Transverse colon (tissue), 4 donors: ENCODE measurements at regions of chr15 and their contacts with region 1.

Region 1: GRCh38 chr15:27028858-27029477 is 58.0 kb downstream of the GABRG3 start:
- DNase-seq: no peak
- H3K4me3 ChIP-seq: no peak overlapping the region
- H3K27ac ChIP-seq: no peak overlapping the region
- H3K4me1 ChIP-seq: no peaks in the 10 kb centered on the region
- H3K27me3 ChIP-seq: no peaks in the 10 kb centered on the region
- CTCF ChIP-seq: no peak
- EP300 ChIP-seq: no peak
- POLR2A ChIP-seq: no peak

Region 2: DNA sequence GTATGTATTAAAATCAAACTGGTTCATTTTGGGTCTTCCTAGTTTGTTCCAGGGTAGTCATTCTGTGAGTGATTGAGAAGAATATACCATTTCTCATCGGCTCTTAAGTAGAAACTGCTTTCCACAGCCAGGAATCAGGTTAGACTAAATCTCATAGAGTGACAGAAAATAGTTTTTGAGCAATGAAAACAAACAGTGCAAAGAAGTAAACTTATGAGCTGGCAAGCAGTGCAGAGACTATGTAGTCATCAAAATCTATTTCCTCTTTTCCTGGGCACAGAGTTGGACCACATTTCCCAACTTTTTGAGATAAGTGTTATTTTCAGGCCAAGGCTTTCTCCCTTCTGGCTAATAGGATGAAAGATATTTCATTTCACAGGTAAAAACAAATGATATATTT is 1656.7 kb before region 1 on chr15:
- in situ Hi-C with region 1: no loop called
- intact Hi-C with region 1: loop called (anchors 5 kb)
- DNase-seq: no peak
- H3K4me3 ChIP-seq: no peak overlapping the region
- H3K27ac ChIP-seq: no peak overlapping the region
- H3K4me1 ChIP-seq: no peaks in the 10 kb centered on the region
- H3K27me3 ChIP-seq: no peaks in the 10 kb centered on the region
- CTCF ChIP-seq: no peak
- EP300 ChIP-seq: no peak
- POLR2A ChIP-seq: no peak

Region 3: DNA sequence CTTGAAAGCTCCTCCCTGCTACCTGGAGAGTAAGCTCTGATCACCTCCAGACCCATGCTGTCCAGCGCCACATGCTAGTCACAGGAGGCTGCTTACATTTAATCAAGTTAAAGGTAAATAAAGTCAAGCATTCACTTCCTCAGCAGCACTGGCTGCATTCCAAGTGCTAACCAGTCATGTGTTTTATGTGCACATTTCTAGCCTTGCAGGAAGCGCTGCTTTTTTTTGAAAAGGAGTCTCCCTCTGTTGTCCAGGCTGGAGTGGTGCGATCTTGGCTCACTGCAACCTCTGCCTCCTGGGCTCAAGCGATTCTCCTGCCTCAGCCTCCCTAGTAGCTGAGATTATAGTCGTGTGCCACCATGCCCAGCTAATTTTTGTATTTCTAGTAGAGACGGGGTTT is 221.3 kb after region 1 on chr15:
- in situ Hi-C with region 1: loop called in 1 of 4 experiments (anchors 25 kb)
- intact Hi-C with region 1: no loop called
- DNase-seq: no peak
- H3K4me3 ChIP-seq: no peak overlapping the region
- H3K27ac ChIP-seq: no peak overlapping the region
- H3K4me1 ChIP-seq: no peaks in the 10 kb centered on the region
- H3K27me3 ChIP-seq: no peaks in the 10 kb centered on the region
- CTCF ChIP-seq: no peak
- EP300 ChIP-seq: no peak
- POLR2A ChIP-seq: no peak

Region 4: DNA sequence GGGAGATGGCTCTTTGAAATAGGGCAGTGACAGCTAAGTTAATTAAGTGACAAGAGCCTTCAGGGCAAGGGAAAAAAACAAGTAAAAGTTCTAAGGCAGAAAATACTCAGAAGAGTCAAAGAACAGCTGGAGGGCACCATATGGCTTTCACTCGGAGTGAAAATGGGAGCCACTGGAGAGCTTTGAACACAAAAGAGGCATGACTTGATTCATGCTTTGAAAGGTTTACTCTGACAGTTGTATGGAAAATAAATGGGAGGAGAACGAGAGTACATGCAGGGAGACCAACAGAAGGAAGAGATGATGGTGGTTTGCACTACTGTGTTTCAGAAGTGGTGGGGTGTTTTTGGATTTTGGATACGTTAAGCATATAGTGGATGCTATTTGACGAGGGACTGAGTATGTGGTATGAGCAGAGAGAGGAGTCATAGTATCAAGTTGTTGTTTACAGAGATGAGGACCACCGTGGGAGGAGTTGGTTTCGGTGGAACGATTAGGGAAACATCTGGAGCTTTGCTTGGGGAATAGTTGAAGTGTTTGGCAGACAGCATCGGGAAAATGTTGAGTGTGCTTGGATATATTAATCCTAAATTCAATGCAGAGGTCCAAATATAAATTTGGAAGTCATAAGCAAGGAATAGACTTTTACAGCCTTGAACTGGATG is 353.5 kb after region 1 on chr15:
- in situ Hi-C with region 1: loop called in 1 of 4 experiments (anchors 25 kb)
- intact Hi-C with region 1: no loop called
- DNase-seq: no peak
- H3K4me3 ChIP-seq: no peak overlapping the region
- H3K27ac ChIP-seq: no peak overlapping the region
- H3K4me1 ChIP-seq: no peaks in the 10 kb centered on the region
- H3K27me3 ChIP-seq: no peaks in the 10 kb centered on the region
- CTCF ChIP-seq: no peak
- EP300 ChIP-seq: no peak
- POLR2A ChIP-seq: no peak